ENCODE measurements at regions of chr7 and their contacts with region 1.

Region 1: GRCh38 chr7:117399820-117400422 is 27.4 kb downstream of the ASZ1 start:
- DNase-seq: no peak
- H3K4me3 ChIP-seq: no peak overlapping the region
- H3K27ac ChIP-seq: no peak overlapping the region
- H3K4me1 ChIP-seq: no peaks in the 10 kb centered on the region
- H3K27me3 ChIP-seq: no peaks in the 10 kb centered on the region
- CTCF ChIP-seq: peak in 1 of 3 experiments; percentile 6; a peak in 1 of 4 replicates
- EP300 ChIP-seq: no peak
- POLR2A ChIP-seq: no peak
- RAD21 ChIP-seq: peak in 1 of 2 experiments; percentile 56; a peak in 3 of 4 replicates

Region 2: DNA sequence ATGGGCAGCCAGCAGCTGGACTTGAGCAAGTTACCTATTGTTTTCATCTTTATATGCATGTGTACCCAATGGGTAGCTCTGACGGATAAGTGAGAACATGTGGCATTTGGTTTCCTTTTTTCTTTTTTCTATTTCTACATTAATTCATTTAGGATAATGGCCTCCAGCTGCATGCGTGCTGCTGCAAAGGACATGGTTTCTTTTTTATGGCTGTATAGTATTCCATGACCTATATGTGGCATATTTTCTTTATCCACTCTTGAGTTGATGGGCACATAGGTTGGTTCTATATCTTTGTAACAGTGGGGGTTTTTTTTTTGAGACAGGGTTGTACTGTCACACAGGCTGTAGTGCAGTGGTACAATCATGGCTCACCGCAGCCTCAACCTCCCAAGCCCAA is 10.1 kb before region 1 on chr7:
- CTCF ChIA-PET with region 1: interaction called, 11 read pairs
- POLR2A ChIA-PET with region 1: no interaction called
- DNase-seq: no peak
- H3K4me3 ChIP-seq: no peak overlapping the region
- H3K27ac ChIP-seq: no peak overlapping the region
- H3K4me1 ChIP-seq: no peaks in the 10 kb centered on the region
- H3K27me3 ChIP-seq: no peaks in the 10 kb centered on the region
- CTCF ChIP-seq: no peak
- EP300 ChIP-seq: no peak
- POLR2A ChIP-seq: no peak
- RAD21 ChIP-seq: no peak

Region 3: DNA sequence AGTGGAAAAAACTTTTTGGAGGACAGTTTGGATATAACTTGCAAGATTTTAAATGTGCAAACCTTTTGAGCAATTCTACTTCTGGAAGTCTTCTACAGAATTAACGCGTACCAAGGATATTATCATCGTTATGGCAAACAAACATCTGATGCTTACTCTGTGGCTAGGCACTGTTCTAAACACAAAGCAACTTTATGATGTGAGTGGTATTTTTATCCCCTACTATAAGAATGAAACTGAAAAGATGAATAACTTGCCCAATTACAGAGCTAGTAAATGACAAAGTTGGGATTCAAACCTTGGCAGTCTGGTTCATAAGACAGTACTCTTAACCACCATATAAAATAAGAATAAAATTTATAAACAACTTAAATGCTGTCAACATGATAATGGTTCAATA is 11.6 kb after region 1 on chr7:
- CTCF ChIA-PET with region 1: interaction called, 20 read pairs
- POLR2A ChIA-PET with region 1: no interaction called
- DNase-seq: no peak
- H3K4me3 ChIP-seq: no peak overlapping the region
- H3K27ac ChIP-seq: no peak overlapping the region
- H3K4me1 ChIP-seq: no peaks in the 10 kb centered on the region
- H3K27me3 ChIP-seq: no peaks in the 10 kb centered on the region
- CTCF ChIP-seq: no peak
- EP300 ChIP-seq: no peak
- POLR2A ChIP-seq: no peak
- RAD21 ChIP-seq: no peak

Region 4: DNA sequence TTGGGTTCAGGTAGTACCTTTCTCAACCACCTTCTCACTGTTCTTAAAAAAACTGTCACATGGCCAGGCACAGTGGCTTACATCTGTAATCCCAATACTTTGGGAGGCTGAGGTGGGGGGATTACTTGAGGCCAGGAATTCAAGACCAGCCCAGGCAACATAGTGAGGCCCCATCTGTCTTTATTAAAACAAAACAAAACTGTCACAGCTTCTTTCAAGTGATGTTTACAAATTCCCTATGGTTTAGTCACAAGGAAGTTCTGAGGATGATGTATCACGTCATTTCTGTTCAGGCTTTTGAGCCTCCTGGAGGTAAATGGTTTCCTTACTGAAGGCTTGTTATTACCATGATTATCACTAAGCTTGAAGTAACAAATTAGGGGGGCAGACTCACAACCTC is 266.1 kb after region 1 on chr7:
- CTCF ChIA-PET with region 1: no interaction called
- POLR2A ChIA-PET with region 1: no interaction called
- DNase-seq: no peak
- H3K4me3 ChIP-seq: no peak overlapping the region
- H3K27ac ChIP-seq: no peak overlapping the region
- H3K4me1 ChIP-seq: peaks cover 0 to 5% (median 2%) of the 10 kb centered on the region in 4 experiments; a peak in 2 of 7 replicates
- H3K27me3 ChIP-seq: no peaks in the 10 kb centered on the region
- CTCF ChIP-seq: no peak
- EP300 ChIP-seq: no peak
- POLR2A ChIP-seq: no peak
- RAD21 ChIP-seq: no peak